ENCODE measurements at regions of chr7 and their contacts with region 1.

Region 1: DNA sequence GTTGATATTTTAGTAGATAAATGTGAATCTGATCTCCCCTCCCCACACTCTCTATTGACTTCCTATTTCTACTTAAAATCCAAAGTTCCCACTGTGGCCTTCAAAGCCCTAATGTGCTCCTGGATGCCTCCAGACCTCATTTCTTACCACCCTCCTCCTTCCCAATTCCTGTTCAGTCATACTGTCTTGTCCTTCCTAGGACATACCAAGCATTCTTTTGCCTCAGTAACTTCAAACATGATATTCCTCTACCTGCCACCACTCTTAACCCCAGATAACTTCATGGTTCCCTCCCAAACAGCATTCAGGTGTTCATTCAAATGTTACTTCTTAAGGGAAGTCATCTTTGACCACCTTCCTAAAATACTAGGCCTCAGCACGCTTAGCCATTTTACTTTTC is 34.2 kb upstream of the FAM221A start:
- DNase-seq: no peak
- H3K4me3 Mint-ChIP-seq: no peak overlapping the region
- H3K27ac Mint-ChIP-seq: no peak overlapping the region
- H3K4me1 Mint-ChIP-seq: no peaks in the 10 kb centered on the region
- H3K27me3 Mint-ChIP-seq: no peaks in the 10 kb centered on the region
- CTCF ChIP-seq: no peak

Region 2: GRCh38 chr7:23490357-23491135 is 155.3 kb before region 1 on chr7:
- CTCF ChIA-PET with region 1: interaction called, 14 read pairs
- intact Hi-C with region 1: no loop called
- DNase-seq: no peak
- H3K4me3 Mint-ChIP-seq: no peak overlapping the region
- H3K27ac Mint-ChIP-seq: no peak overlapping the region
- H3K4me1 Mint-ChIP-seq: peaks cover 9% of the 10 kb centered on the region
- H3K27me3 Mint-ChIP-seq: no peaks in the 10 kb centered on the region
- CTCF ChIP-seq: no peak

Region 3: DNA sequence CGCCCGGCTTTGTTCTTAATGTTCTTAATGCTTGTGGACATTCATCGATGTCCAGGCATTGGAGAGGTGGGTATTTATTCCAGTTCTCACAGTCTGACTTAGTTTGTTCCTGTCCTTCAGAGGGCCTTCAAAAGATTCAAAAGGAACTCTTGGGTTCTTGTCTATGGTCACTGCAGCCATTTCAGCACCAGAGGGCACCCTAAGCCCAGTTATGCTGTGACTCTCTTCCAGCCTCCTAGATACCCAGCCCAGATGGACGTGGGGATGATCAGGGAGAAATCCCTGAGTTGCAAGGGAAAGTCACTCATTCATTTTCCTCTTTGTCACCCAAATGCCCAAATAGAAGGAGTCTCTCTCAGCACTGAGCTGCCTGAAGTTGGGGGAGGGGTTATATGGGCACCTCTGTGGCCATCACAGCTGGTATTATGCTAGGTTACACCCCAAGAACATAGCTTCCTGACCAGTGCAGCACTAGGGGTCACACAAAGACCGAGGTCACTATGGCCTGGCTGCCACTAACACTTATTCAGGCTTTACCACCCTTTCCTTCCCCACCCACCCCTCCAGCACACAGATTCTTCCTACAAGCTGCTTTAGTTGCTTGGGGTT is 75.1 kb before region 1 on chr7:
- CTCF ChIA-PET with region 1: no interaction called
- intact Hi-C with region 1: no loop called
- DNase-seq: peak; percentile 90
- H3K4me3 Mint-ChIP-seq: no peak overlapping the region
- H3K27ac Mint-ChIP-seq: no peak overlapping the region
- H3K4me1 Mint-ChIP-seq: no peaks in the 10 kb centered on the region
- H3K27me3 Mint-ChIP-seq: no peaks in the 10 kb centered on the region
- CTCF ChIP-seq: peak; percentile 96

Region 4: GRCh38 chr7:23672033-23672432 is 26.2 kb after region 1 on chr7:
- CTCF ChIA-PET with region 1: no interaction called
- intact Hi-C with region 1: no loop called
- DNase-seq: no peak
- H3K4me3 Mint-ChIP-seq: no peak overlapping the region
- H3K27ac Mint-ChIP-seq: no peak overlapping the region
- H3K4me1 Mint-ChIP-seq: no peaks in the 10 kb centered on the region
- H3K27me3 Mint-ChIP-seq: no peaks in the 10 kb centered on the region
- CTCF ChIP-seq: no peak

Measured in Calu3 (cell line).